ENCODE measurements at regions of chr2 and their contacts with region 1.

Region 1: GRCh38 chr2:28452534-28453081 is 43.3 kb upstream of the PLB1 start:
- DNase-seq: peak in 1 of 2 donors; percentile 81
- H3K4me3 ChIP-seq: no peak overlapping the region
- H3K27ac ChIP-seq: no peak overlapping the region
- H3K4me1 ChIP-seq: no peaks in the 10 kb centered on the region
- H3K27me3 ChIP-seq: no peaks in the 10 kb centered on the region
- CTCF ChIP-seq: peak; percentile 80 to 91 (median 82)

Region 2: DNA sequence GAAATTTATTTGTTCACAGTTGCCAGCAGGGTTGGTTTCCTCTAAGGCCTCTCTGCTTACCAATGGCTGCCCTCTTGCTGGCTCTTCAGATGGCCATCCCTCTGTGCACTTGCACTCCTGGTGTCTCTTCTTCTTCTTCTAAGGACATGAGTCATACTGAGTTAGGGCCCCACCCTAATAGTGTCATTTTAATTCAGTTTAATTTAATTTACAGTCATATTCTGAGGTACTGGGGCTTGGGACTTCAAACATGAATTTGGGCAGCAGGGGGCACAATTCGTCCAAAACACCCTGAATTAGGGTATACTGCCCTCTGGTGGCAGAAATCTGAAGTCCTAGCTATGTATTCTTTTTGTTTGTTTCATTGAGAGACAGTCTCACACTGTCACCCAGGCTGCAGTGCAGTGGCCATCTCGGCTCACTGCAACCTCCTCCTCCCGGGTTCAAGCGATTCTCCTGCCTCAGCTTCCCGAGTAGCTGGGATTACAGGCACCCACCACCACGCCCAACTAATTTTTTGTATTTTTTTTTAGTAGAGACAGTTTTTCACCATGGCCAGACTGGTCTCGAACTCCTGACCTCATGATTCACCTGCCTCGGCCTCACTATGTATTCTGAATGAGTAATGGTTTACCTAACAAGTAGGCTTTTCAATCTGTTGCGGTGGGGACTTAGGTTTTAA is 769.1 kb before region 1 on chr2:
- intact Hi-C with region 1: loop called (anchors 5 kb)
- DNase-seq: peak in 1 of 2 donors; percentile 90
- H3K4me3 ChIP-seq: no peak overlapping the region
- H3K27ac ChIP-seq: peak overlapping the region; percentile 89 to 93
- H3K4me1 ChIP-seq: peaks cover 9 to 16% of the 10 kb centered on the region in 2 donors
- H3K27me3 ChIP-seq: no peaks in the 10 kb centered on the region
- CTCF ChIP-seq: peak; percentile 85 to 89 (median 88)

Region 3: GRCh38 chr2:28175028-28175427 is 277.6 kb before region 1 on chr2:
- intact Hi-C with region 1: no loop called
- DNase-seq: no peak
- H3K4me3 ChIP-seq: no peak overlapping the region
- H3K27ac ChIP-seq: no peak overlapping the region
- H3K4me1 ChIP-seq: no peaks in the 10 kb centered on the region
- H3K27me3 ChIP-seq: no peaks in the 10 kb centered on the region
- CTCF ChIP-seq: no peak